ENCODE measurements at regions of chrX and their contacts with region 1.

Region 1: GRCh38 chrX:56813318-56813837 is 84.3 kb downstream of the NBDY start:
- DNase-seq: peak; percentile 53
- H3K4me3 Mint-ChIP-seq: peak overlapping the region; percentile 75
- H3K27ac Mint-ChIP-seq: peak overlapping the region; percentile 96
- H3K4me1 Mint-ChIP-seq: peaks cover 29% of the 10 kb centered on the region
- H3K27me3 Mint-ChIP-seq: no peaks in the 10 kb centered on the region

Region 2: DNA sequence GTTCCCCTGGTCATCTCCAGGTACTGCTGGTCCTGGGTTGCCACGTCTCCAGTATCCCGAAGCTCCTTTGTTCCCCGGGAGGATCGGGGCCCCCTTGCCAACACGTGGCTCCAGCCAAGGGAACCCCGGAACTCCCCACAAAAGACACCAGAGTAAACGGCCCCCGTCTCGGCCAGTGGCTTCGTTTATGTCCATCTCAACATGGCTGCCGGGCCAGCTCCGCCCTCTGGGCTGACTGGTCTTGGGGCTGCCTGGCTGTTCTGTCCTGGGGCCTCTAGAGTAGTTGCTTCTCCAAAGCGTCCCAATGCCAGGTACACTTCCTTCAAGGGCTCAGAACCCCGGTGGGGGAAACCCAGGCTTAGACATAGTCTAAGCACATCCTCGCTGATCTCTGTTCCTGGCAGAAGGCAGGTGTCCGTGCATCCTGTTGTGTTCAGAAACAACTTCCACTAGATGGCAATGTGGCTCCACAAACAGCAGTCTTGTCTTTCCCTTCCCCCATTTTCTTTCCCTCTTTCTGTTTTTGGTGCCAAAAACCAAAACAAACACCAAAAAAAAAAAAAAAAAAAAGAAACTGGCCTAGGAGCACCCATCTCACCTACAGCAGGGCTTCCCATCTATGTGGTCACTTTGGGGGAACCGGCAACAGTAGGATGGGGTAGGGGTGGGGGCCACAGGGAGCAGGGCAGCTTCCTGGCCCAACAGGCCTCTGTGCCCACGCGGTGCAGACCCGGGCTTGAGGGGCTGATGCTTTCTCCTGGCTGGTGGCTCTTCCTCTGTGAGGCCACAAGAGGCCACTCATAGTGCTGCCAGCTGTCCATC is 49.0 kb before region 1 on chrX:
- intact Hi-C with region 1: no loop called
- DNase-seq: peak; percentile 60
- H3K4me3 Mint-ChIP-seq: peak overlapping the region; percentile 71
- H3K27ac Mint-ChIP-seq: peak overlapping the region; percentile 96
- H3K4me1 Mint-ChIP-seq: peaks cover 40% of the 10 kb centered on the region
- H3K27me3 Mint-ChIP-seq: no peaks in the 10 kb centered on the region

Region 3: DNA sequence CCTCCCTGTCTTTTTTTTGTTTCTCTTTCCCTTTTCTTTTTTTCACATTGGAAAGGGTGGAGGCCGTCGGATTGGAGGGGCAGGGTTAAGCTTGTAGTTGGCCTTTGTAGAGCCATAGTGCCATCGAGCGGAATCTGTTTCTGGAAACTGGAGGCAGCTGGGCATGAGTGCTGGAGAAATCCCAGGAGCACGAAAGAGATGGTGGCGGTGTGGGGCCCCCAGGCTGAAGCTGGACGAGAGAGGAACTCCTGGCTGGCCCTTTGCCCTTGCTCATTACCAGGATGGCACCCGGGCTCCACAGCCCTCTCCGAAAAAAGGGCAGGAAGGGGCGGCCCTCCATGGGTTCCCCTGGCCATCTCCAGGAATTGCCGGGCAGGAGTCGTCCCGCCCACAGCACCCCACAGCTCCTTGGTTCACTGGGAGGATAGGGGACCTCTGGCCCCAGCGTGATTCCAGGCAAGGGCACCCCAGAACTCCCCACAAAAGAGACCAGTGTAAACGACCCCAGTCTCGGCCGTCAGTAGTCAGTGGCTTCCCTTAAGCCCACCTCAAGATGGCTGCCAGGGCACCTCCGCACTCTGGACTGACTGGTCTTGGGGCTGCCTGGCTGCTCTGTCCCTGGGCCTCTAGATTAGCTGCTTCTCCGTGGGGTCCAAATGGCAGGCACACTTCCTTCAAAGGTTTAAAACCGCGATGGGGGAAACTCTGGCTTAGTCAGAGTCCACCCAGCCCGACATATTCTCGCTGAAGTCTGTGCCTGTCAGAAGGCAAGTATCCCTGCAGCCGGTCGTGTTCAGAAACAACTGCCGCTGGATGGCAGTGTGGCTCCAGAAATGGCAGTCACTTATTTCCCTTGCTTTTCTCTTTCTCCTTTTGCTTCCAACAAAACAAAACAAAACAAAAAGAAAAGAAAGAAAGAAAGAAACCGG is 10.2 kb before region 1 on chrX:
- intact Hi-C with region 1: loop called (anchors 1 kb)
- DNase-seq: peak; percentile 35
- H3K4me3 Mint-ChIP-seq: peak overlapping the region; percentile 64
- H3K27ac Mint-ChIP-seq: no peak overlapping the region
- H3K4me1 Mint-ChIP-seq: peaks cover 32% of the 10 kb centered on the region
- H3K27me3 Mint-ChIP-seq: no peaks in the 10 kb centered on the region

Region 4: GRCh38 chrX:56826020-56826419 is 12.6 kb after region 1 on chrX:
- intact Hi-C with region 1: no loop called
- DNase-seq: no peak
- H3K4me3 Mint-ChIP-seq: no peak overlapping the region
- H3K27ac Mint-ChIP-seq: no peak overlapping the region
- H3K4me1 Mint-ChIP-seq: no peaks in the 10 kb centered on the region
- H3K27me3 Mint-ChIP-seq: no peaks in the 10 kb centered on the region

Region 5: GRCh38 chrX:56978172-56978571 is 164.8 kb after region 1 on chrX:
- intact Hi-C with region 1: loop called (anchors 2 kb)
- DNase-seq: peak; percentile 22
- H3K4me3 Mint-ChIP-seq: no peak overlapping the region
- H3K27ac Mint-ChIP-seq: no peak overlapping the region
- H3K4me1 Mint-ChIP-seq: no peaks in the 10 kb centered on the region
- H3K27me3 Mint-ChIP-seq: no peaks in the 10 kb centered on the region

Region 6: GRCh38 chrX:57380026-57380796 is 566.8 kb after region 1 on chrX:
- intact Hi-C with region 1: no loop called
- DNase-seq: no peak
- H3K4me3 Mint-ChIP-seq: no peak overlapping the region
- H3K27ac Mint-ChIP-seq: peak overlapping the region; percentile 81
- H3K4me1 Mint-ChIP-seq: peaks cover 15% of the 10 kb centered on the region
- H3K27me3 Mint-ChIP-seq: no peaks in the 10 kb centered on the region

Region 7: DNA sequence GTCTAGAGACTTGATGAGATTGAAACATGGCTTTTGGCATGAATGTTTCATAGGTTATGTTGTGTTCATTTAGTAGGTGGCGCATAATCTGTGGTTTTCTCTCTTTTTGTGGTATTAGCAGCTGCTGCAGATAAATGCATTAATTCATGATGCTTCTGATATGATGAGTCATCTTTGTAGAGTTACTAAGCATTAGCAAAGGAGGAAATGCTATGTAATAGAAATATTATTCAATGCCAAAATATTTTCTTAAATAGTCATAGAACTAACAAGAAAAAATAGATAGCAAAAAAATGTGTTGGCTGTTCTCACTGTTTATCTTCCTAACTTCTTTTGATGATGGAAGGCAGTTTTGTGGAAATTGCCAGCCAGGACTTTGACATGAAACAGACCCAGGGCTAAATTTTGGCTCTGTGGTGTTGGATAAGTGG is 782.0 kb after region 1 on chrX:
- intact Hi-C with region 1: loop called (anchors 5 kb)
- DNase-seq: no peak
- H3K4me3 Mint-ChIP-seq: peak overlapping the region; percentile 74
- H3K27ac Mint-ChIP-seq: peak overlapping the region; percentile 63
- H3K4me1 Mint-ChIP-seq: peaks cover 24% of the 10 kb centered on the region
- H3K27me3 Mint-ChIP-seq: no peaks in the 10 kb centered on the region

Region 8: GRCh38 chrX:57906790-57907189 is 1093.4 kb after region 1 on chrX:
- intact Hi-C with region 1: loop called (anchors 5 kb)
- DNase-seq: no peak
- H3K4me3 Mint-ChIP-seq: peak overlapping the region; percentile 49
- H3K27ac Mint-ChIP-seq: no peak overlapping the region
- H3K4me1 Mint-ChIP-seq: peaks cover 27% of the 10 kb centered on the region
- H3K27me3 Mint-ChIP-seq: no peaks in the 10 kb centered on the region